GM10248 (cell line): ENCODE measurements at regions of chr12 and their contacts with region 1.

Region 1: GRCh38 chr12:57452937-57453509 is 2.1 kb upstream of the INHBE start:
- DNase-seq: peak; percentile 66
- CTCF ChIP-seq: peak; percentile 94

Region 2: GRCh38 chr12:57166971-57167371 is 286.1 kb before region 1 on chr12:
- CTCF ChIA-PET with region 1: no interaction called
- POLR2A ChIA-PET with region 1: no interaction called
- DNase-seq: no peak
- CTCF ChIP-seq: no peak

Region 3: GRCh38 chr12:57213058-57213715 is 239.8 kb before region 1 on chr12:
- CTCF ChIA-PET with region 1: interaction called, 35 read pairs
- POLR2A ChIA-PET with region 1: no interaction called
- DNase-seq: peak; percentile 89
- CTCF ChIP-seq: peak; percentile 97

Region 4: GRCh38 chr12:57248934-57249742 is 203.9 kb before region 1 on chr12:
- CTCF ChIA-PET with region 1: interaction called, 84 read pairs
- POLR2A ChIA-PET with region 1: no interaction called
- DNase-seq: peak; percentile 53
- CTCF ChIP-seq: no peak

Region 5: DNA sequence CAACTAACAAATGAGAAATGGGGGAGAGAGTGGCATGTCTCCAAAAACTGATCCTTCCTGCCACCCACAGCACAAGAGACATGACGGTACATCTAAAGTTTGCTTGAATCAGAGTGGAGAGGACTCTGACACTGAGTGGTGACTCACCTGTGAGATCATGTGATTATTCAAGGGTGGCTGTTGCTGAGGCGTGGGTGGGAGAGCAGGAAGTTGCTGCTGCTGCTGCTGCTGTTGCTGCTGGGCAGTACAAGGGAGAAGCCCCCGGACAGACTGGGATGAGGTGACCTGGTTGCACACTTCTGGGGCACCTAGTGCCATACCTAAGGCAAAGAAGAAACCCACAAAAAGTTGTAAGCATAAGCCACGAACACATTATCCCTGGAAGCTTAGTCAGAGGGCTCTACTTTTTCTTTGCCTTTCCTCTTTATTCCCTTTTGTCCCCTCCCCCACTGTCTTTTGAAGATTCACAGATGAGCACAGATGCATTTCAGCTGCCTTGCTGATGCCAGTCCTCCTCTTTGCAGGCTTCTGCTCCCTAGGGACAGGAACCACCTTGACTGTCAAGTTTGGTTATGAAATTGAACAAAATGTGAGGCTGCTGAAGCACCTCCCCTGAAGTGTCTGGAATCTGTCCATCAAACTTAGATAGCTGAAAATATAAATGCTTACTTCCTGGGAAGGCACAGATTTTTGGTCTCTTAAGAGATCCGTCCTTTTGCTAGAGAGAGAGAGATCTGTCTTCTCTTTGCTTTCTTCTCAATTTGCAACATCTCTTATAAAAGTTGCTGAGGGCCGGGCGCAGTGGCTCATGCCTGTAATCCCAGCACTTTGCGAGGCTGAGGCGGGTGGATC is 172.6 kb before region 1 on chr12:
- CTCF ChIA-PET with region 1: interaction called, 16 read pairs
- POLR2A ChIA-PET with region 1: no interaction called
- DNase-seq: peak; percentile 85
- CTCF ChIP-seq: no peak

Region 6: DNA sequence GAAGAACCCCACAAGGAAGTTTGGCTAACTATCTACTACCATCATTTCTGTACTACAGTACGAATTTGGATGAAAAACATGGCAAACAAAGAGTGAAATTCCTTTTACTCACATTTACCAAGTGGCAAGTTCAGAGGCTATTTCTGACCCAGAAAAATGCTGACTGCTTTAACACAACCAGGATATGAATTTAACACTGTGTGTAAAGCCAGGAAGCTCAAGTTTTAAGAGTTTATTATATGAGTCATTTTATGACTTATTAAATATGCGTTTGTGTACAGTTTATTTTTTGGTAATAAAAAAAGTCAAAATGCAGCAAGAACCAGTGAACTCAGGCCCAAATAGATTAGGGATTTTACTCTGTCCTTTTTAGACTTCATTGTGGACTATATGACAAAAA is 143.6 kb before region 1 on chr12:
- CTCF ChIA-PET with region 1: interaction called, 238 read pairs
- POLR2A ChIA-PET with region 1: no interaction called
- DNase-seq: no peak
- CTCF ChIP-seq: no peak

Region 7: DNA sequence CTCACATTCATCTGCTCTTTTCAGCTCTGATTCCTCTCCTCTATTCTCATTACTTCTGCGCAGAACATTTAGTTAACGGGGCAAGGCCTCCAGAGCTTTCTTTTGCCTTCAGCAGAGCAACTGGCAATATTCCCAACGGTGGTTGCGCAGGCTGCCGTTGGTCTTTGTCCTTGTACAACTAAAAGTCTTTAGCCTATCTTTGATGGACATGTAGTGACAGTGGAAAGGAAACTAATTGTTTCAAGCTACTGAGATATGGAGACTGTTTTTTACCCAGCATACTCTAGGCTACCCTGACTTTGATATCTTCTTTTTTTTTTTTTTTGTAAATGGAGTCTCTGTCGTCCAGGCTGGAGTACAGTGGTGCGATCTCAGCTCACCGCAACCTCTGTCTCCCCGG is 34.8 kb before region 1 on chr12:
- CTCF ChIA-PET with region 1: interaction called, 14 read pairs
- POLR2A ChIA-PET with region 1: no interaction called
- DNase-seq: no peak
- CTCF ChIP-seq: no peak

Region 8: GRCh38 chr12:57476162-57476992 is 23.4 kb after region 1 on chr12:
- CTCF ChIA-PET with region 1: interaction called, 171 read pairs
- POLR2A ChIA-PET with region 1: no interaction called
- DNase-seq: peak; percentile 77
- CTCF ChIP-seq: peak; percentile 54

Region 9: DNA sequence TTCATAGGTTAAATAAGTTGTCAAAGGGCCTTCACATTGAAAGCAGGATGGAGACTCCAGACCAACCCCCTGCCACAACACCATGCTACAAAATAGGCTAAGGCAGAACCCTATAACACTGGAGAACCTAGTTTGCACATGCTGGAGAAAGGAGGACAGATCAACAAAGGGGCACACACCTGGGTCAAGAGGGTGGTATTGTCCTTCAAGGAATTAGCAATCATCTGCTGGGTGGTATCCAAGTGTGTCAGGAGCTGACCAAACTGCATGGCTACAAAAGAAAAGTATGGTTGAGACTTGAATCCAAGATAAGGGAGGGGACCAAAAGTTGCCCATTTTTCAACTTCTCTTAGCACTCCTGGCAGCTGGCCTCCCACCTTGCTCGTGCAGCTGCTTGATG is 78.8 kb after region 1 on chr12:
- CTCF ChIA-PET with region 1: no interaction called
- POLR2A ChIA-PET with region 1: no interaction called
- DNase-seq: no peak
- CTCF ChIP-seq: no peak

Region 10: GRCh38 chr12:57726151-57726883 is 273.3 kb after region 1 on chr12:
- CTCF ChIA-PET with region 1: no interaction called
- POLR2A ChIA-PET with region 1: no interaction called
- DNase-seq: peak; percentile 16
- CTCF ChIP-seq: peak; percentile 39